ENCODE measurements at regions of chr5 and their contacts with region 1.

Region 1: DNA sequence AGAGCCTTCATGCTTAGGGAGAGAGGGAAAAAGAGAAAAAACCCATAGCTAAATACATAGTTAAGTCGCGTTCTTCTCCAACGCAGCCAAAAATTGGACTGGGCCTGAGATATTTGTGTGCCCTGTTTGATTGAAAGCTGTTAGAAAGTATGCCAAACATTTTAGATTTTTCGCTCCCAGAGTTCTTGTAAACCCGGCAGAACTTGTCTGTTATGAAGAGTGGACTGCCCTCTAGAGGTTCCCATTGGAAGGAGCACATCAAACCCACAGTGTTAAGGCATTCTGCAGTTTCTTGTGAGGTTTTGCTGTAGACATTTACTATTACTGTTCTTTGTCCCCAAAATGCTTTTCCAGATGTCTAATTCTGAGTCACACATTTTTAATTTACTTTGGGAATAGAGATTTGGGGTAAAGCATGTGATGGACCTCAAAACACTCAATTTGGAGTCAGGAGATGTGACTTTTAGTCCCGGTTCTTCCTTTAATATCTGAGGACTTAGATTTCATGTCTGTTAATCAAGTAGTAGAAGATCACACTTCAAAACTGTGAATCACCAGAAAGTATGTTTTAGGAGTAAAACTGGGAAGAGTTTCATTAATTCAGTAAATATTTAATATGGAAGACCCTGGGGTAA is 96.6 kb downstream of the PCSK1 start:
- DNase-seq: peak; percentile 76
- H3K27ac ChIP-seq: no peak overlapping the region
- CTCF ChIP-seq: peak; percentile 96

Region 2: DNA sequence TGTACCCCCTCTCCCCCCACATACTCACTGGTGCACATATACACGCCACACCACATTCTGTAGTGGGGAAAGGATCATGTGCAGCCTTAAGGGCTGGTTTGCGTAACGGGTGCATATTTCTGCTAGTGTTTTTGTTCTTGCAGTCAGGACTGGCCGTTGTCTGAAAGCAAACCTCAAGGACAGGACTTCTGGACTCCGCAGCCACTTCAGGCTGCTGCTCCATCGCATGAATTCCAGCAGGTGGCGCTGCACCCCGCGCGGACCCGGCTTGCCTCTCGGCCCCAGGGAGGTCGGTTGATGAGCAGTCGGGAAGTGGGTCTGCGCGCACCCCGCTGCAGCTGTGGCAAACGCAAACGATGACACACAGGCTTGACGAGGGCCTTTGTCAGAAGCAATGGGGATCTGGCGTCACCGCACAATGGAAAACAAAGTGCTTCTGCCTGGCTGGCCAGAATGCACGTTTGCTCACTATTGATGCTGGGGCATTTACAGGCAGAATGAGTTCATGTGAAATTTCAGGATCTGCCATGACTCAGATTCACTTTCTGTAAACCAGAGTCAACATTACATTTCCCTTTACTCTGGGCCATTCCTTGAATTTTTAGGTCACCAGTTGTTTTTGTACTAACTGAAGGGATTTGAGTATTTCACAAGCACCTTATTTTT is 477.7 kb before region 1 on chr5:
- CTCF ChIA-PET with region 1: interaction called, 19 read pairs
- POLR2A ChIA-PET with region 1: no interaction called
- DNase-seq: peak; percentile 97
- H3K27ac ChIP-seq: peak overlapping the region; percentile 91
- CTCF ChIP-seq: peak; percentile 99

Region 3: DNA sequence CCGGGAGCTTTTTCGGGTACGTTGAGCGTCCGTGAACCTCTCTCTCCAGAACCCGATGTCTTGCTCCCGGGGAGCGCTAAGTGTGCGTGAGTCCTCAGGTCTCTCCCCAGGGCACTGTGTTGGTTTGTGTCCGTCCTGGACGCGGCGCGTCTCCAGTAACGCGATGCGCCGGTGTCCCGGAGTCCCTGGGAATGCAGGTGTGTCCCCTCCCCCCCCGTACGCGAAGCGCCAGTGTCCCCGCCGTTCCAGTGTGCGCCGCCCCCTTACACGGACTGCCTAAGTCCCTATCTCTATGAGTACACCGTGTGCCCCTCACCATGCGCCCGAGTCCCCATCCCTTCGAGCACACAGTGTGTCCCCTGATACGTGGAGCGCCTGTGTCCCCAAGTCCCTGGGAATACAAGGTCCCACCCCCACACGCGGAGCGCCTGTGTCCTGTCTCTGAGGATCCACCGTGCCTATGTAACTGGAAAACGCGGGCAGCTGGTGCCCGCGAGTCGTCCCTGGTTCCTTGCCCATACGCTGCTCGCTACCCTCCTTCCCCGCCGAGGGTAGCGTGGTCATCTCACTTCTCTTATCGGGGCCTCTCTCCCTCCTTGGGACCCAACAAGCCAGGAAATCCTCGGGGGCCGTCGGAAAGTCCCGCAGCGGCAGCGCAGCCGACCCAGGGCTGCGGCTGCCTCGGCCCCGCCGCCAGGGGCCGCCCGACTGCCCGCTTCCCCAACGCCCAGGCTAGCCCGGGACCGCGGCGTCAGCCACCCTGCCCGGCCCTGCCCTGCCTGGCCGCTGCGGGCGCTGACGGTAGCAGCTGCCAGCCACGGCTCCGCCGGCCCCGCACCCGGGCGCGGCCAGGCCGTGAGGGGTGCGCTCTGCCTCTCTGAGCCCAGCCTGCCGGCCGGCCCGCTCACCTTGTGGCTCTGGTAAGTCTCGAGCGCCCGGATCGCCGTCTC is 375.5 kb before region 1 on chr5:
- CTCF ChIA-PET with region 1: interaction called, 11 read pairs
- POLR2A ChIA-PET with region 1: no interaction called
- DNase-seq: peak; percentile 79
- H3K27ac ChIP-seq: peak overlapping the region; percentile 89
- CTCF ChIP-seq: peak; percentile 98

Region 4: GRCh38 chr5:96054311-96055030 is 282.0 kb before region 1 on chr5:
- CTCF ChIA-PET with region 1: no interaction called
- POLR2A ChIA-PET with region 1: no interaction called
- DNase-seq: no peak
- H3K27ac ChIP-seq: no peak overlapping the region
- CTCF ChIP-seq: no peak

Region 5: DNA sequence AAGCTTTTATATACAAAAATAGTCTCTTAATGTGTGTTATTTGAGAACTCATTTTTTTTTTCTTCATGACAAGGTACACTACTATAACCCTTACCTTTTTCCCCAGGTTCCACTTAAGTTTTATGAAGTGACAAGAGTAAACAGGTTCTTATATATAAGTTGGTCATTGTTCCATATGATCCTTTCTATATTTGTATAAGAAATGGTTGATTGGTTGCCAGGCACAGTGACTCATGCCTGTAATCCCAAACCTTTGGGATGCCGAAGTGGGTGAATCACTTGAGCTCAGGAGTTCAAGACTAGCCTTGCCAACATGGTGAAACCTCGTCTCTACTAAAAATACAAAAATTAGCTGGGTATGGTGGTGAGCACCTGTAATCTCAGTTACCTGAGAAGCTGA is 11.8 kb before region 1 on chr5:
- CTCF ChIA-PET with region 1: interaction called, 11 read pairs
- POLR2A ChIA-PET with region 1: no interaction called
- DNase-seq: peak; percentile 58
- H3K27ac ChIP-seq: peak overlapping the region; percentile 28; the same call in 1 of the 2 replicates
- CTCF ChIP-seq: no peak